Activated CD4-positive, alpha-beta T cell treated with anti-CD3 and anti-CD28 coated beads for 36 hours (primary cell): ENCODE measurements at regions of chr6 and their contacts with region 1.

Region 1: DNA sequence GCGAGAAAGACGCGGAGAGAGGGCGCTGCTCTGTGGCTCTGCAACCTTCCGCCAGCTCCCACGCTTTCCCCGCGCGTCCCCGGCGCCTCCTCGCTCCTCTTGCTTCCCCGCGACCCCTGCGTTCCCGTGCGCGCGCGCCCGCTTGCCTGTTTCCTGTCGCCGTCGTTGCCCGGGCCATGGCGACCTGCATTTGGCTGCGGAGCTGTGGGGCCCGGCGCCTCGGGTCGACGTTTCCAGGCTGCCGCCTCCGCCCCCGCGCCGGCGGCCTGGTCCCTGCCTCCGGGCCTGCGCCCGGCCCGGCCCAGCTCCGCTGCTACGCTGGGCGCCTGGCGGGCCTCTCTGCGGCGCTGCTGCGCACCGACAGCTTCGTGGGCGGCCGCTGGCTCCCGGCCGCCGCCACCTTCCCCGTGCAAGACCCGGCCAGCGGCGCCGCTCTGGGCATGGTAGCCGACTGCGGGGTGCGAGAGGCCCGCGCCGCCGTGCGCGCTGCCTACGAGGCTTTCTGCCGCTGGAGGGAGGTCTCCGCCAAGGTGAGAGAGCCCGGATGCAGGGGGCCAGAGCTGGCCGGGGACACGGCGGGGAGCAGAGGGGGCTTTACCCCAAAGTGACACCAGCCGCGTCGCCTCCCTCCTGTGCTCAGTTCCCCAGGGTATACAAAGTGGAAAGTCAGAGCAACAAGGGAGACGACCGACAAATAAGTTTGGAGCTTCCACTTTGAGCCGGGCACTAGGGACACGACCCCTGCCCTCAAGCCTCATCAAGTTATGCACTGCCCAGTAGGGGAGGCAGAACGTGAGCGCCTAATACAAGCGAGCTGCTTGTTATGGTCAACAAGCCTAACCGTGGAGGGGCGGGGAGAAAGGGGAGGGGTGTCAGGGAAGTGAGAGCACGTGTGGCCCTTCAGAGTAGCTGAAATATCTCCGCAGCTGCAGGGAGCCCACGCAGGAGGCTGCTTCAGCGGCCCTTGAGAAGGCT is at the start of gene ALDH5A1:
- DNase-seq: peak; percentile 92
- ATAC-seq: peak; percentile 84
- H3K4me3 Mint-ChIP-seq: peak within 1 kb of the TSS; percentile 77
- H3K27ac Mint-ChIP-seq: peak within 1 kb of the TSS; percentile 76
- H3K4me1 Mint-ChIP-seq: peaks cover 14% of the 10 kb centered on the region
- H3K27me3 Mint-ChIP-seq: no peaks in the 10 kb centered on the region
- total RNA-seq, gene ALDH5A1: 16.5 to 18.8 TPM

Region 2: GRCh38 chr6:24359640-24360454 is 135.3 kb before region 1 on chr6:
- CTCF ChIA-PET with region 1: interaction called, 5 read pairs
- POLR2A ChIA-PET with region 1: no interaction called
- intact Hi-C with region 1: loop called in 1 of 2 experiments (anchors 1 kb)
- DNase-seq: peak; percentile 95
- ATAC-seq: peak; percentile 96
- H3K4me3 Mint-ChIP-seq: peak overlapping the region; percentile 70
- H3K27ac Mint-ChIP-seq: peak overlapping the region; percentile 61
- H3K4me1 Mint-ChIP-seq: peaks cover 28% of the 10 kb centered on the region
- H3K27me3 Mint-ChIP-seq: peaks cover 18% of the 10 kb centered on the region